B cell (primary cell): ENCODE measurements at regions of chr4 and their contacts with region 1.

Region 1: DNA sequence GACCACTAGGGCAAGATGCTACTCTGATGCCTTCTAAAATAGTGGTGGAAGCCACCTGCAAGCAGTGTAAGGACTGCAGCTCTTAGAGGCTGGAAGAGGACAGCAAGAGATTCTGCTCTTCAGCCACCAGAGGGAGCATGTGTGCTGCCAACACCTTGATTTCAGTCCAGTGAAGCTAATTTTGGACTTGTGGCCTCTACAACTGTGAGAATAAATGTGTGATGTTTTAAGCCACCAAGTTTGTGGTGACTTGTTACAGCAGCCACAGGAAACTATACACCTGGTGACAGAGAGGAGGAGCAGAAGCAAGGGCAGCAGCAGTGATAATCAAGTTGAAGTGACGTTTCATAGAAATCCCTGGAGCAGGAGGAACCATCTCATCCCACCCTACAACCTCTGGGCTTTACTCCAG is 55.9 kb downstream of the FGFBP1 start:
- DNase-seq: peak; percentile 71
- ATAC-seq: peak; percentile 65
- H3K4me3 ChIP-seq: no peak overlapping the region
- H3K4me3 Mint-ChIP-seq: no peak overlapping the region
- H3K27ac ChIP-seq: no peak overlapping the region
- H3K27ac Mint-ChIP-seq: no peak overlapping the region
- H3K4me1 ChIP-seq: no peaks in the 10 kb centered on the region
- H3K4me1 Mint-ChIP-seq: peaks cover 2% of the 10 kb centered on the region
- H3K27me3 ChIP-seq: peaks cover 0 to 3% (median 0%) of the 10 kb centered on the region in 4 experiments
- H3K27me3 Mint-ChIP-seq: peaks cover 4% of the 10 kb centered on the region
- CTCF ChIP-seq: peak; percentile 91

Region 2: DNA sequence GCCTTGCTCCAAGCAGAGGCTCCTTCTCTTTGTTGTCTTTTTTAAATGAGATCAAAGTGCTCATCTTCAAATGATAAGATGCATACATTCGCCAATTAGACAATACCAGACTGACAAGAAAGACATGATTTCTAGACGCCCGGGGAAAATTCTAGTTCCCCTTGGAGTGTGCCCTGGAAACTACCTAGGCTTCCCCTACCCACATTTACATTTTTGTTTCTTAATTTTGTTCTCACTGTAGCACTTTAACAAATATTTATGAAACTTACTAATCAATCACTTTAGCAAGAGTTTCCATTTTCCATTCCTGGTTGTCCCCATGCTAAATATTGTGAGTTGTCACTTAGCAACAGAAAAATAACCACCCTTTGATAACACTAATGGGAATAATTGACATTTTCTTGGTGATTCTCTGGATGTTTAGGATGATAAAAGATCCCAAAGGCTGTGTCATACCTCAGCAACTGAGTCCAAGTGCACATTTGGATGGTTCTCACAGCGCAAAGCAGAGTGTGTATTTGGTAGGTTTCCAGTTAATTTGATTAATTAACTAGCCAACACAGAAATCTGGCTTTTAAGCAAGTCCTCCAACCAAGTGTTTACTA is 13.8 kb before region 1 on chr4:
- CTCF ChIA-PET with region 1: interaction called, 13 read pairs
- POLR2A ChIA-PET with region 1: no interaction called
- intact Hi-C with region 1: no loop called
- DNase-seq: no peak
- ATAC-seq: no peak
- H3K4me3 ChIP-seq: no peak overlapping the region
- H3K4me3 Mint-ChIP-seq: no peak overlapping the region
- H3K27ac ChIP-seq: no peak overlapping the region
- H3K27ac Mint-ChIP-seq: no peak overlapping the region
- H3K4me1 ChIP-seq: no peaks in the 10 kb centered on the region
- H3K4me1 Mint-ChIP-seq: no peaks in the 10 kb centered on the region
- H3K27me3 ChIP-seq: no peaks in the 10 kb centered on the region
- H3K27me3 Mint-ChIP-seq: no peaks in the 10 kb centered on the region
- CTCF ChIP-seq: no peak

Region 3: DNA sequence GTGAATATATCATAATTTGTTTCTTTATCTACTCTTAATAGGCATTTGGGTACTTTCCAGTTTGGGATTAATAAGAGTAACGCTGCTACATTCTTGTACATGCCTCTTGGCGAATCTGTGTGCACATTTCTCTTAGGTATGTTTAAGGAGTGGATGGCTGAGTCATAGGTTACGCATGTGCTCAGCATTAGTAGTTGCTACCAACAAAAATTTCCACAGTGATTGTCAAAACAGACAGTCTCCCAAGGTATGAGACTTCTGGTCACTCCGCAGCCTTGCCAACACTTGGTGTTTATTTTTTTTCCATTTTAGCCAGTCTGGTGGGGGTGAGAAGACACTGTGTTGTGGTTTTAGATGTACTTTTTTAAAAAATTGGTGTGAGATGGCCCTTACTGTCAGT is 11.3 kb after region 1 on chr4:
- CTCF ChIA-PET with region 1: interaction called, 18 read pairs
- POLR2A ChIA-PET with region 1: no interaction called
- intact Hi-C with region 1: no loop called
- DNase-seq: no peak
- ATAC-seq: no peak
- H3K4me3 ChIP-seq: no peak overlapping the region
- H3K4me3 Mint-ChIP-seq: no peak overlapping the region
- H3K27ac ChIP-seq: no peak overlapping the region
- H3K27ac Mint-ChIP-seq: no peak overlapping the region
- H3K4me1 ChIP-seq: peaks cover 14 to 15% of the 10 kb centered on the region in 2 donors
- H3K4me1 Mint-ChIP-seq: peaks cover 21% of the 10 kb centered on the region
- H3K27me3 ChIP-seq: no peaks in the 10 kb centered on the region
- H3K27me3 Mint-ChIP-seq: peaks cover 4% of the 10 kb centered on the region
- CTCF ChIP-seq: no peak

Region 4: DNA sequence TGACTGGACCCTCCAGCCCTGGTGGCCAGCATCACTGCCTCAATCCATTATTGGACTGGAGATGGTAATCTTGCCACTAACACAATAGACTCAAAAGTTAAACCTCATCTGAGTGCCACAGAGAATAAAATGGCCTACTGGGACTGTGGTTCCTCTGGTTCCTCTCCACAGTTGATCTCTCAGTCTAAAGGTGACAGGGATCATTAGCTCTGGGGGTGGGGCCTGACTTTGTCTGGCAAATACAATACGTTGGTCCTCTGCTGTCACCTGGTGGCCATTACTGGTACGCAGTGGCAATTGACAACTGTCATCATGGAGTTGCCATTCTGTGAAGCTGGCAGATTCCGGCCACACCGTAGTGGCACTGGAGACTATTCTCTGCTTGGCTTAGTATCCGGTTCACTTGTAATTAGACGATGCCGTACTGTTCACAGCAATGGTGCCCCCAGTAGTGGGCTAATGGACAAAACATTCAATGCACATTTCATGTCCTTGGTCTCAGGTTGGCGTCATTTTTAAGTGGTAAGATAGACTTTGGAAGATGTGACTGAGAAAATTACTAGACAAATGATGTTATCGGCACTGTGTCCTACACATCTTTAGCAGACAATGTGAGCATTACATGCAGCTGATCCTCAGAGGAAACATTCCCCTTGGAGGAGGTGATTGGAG is 73.6 kb after region 1 on chr4:
- CTCF ChIA-PET with region 1: interaction called, 74 read pairs
- POLR2A ChIA-PET with region 1: no interaction called
- intact Hi-C with region 1: no loop called
- DNase-seq: peak; percentile 81
- ATAC-seq: peak; percentile 98
- H3K4me3 ChIP-seq: no peak overlapping the region
- H3K4me3 Mint-ChIP-seq: no peak overlapping the region
- H3K27ac ChIP-seq: no peak overlapping the region
- H3K27ac Mint-ChIP-seq: no peak overlapping the region
- H3K4me1 ChIP-seq: peaks cover 0 to 3% of the 10 kb centered on the region in 2 donors
- H3K4me1 Mint-ChIP-seq: peaks cover 9% of the 10 kb centered on the region
- H3K27me3 ChIP-seq: no peaks in the 10 kb centered on the region
- H3K27me3 Mint-ChIP-seq: peaks cover 6% of the 10 kb centered on the region
- CTCF ChIP-seq: peak; percentile 81

Region 5: GRCh38 chr4:16001484-16001858 is 118.8 kb after region 1 on chr4:
- CTCF ChIA-PET with region 1: interaction called, 44 read pairs
- POLR2A ChIA-PET with region 1: no interaction called
- intact Hi-C with region 1: loop called (anchors 1 kb)
- DNase-seq: peak; percentile 68
- ATAC-seq: peak; percentile 81
- H3K4me3 ChIP-seq: no peak overlapping the region
- H3K4me3 Mint-ChIP-seq: no peak overlapping the region
- H3K27ac ChIP-seq: no peak overlapping the region
- H3K27ac Mint-ChIP-seq: no peak overlapping the region
- H3K4me1 ChIP-seq: no peaks in the 10 kb centered on the region
- H3K4me1 Mint-ChIP-seq: no peaks in the 10 kb centered on the region
- H3K27me3 ChIP-seq: no peaks in the 10 kb centered on the region
- H3K27me3 Mint-ChIP-seq: no peaks in the 10 kb centered on the region
- CTCF ChIP-seq: peak; percentile 82